Sciatic nerve (tissue), 2 donors: ENCODE measurements at regions of chr5 and their contacts with region 1.

Region 1: DNA sequence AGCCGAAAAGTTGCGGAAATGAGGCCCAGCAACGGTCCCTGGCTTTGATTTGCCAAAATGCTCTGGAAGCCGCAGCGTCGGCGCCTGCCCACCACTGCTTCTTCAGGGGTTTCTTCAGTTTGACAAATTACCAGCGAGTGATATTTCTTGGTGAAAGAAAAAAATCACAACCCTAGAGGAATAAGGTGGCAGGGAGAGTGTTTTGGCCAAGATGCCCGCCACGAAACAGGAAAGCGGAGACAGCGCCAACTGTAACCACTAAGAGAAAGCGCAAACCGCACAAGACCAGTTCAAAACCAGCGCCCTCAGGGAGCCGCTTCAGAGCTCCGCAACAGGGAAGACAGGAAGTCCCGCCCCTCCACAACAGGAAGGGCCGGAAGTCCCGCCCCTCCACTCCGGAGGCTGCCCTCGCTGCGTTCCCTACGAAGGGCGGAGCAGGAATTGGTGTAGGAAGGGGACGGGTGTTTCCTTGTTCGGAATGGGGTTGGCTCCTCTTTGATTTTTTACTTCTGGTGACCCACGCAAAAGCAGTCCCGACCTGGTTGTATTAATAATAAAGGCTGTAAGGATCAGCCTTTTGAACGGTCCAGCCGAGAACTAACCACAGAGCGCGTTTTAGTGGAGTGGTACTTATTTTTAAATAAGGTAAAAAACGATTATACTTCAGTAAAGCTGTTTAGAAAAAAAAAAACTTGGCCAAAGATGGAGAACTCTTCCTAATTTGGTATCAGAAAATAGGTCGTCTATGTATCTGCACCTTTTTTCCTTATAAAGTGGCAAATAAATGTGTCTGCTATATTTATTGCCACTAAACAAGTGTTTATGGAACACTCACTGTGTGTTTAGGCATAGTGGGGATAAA is at the start of gene C5orf34:
- DNase-seq: peak; percentile 98
- ATAC-seq: peak; percentile 100
- total RNA-seq, gene C5orf34: 1.5 TPM

Region 2: GRCh38 chr5:43551731-43552130 is 36.7 kb after region 1 on chr5:
- intact Hi-C with region 1: loop called (anchors 1 kb)
- DNase-seq: no peak
- ATAC-seq: no peak

Region 3: DNA sequence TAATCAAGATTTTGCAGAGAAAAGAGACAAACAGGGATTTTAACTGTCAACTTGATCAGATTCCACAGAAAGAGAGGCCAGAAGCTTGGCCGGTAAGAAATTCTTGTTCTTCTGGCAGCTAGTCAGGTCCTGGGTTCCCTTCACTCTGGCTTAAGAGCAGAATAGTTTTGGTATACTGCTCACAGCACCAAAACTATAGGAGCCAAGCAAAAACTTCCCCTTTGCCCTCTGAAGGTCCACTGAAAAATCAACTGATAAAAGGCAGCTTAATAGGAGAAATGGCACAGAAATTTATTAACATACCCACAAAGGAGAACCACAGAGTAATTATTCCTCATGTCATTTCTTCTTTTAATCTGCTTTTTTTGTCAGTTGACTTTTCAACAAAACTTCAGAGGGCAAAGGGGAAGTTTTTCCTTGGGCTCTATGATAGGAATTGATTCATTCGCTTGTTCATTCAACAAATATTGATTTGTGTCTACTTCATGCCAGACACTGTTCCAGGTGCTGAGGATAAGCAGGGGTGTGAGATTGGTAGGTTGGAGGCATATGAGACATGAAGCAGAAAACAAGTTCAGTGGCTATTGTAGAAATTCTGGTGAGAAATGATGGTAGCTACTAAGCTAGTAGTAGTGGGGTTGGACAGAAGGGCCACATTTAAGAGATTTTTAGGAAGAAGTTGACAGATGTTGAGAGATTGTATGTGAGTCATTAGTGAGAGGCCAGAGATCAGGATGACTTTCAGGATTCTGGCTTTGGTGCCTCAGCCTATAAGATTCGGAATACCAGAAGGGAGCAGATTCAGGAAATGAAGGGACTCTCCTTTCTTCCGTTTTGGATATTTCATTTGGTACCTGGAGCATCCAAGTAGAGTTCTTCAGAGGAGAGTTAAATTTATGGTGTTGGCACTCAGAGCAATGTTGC is 67.3 kb after region 1 on chr5:
- intact Hi-C with region 1: no loop called
- DNase-seq: no peak
- ATAC-seq: no peak